ENCODE measurements at regions of chr4 and their contacts with region 1.

Region 1: GRCh38 chr4:77376788-77377460 is 219.9 kb downstream of the CCNG2 start:
- DNase-seq: no peak
- H3K4me3 ChIP-seq: no peak overlapping the region
- H3K4me3 Mint-ChIP-seq: no peak overlapping the region
- H3K27ac Mint-ChIP-seq: no peak overlapping the region
- H3K4me1 ChIP-seq: no peaks in the 10 kb centered on the region
- H3K4me1 Mint-ChIP-seq: no peaks in the 10 kb centered on the region
- H3K27me3 ChIP-seq: no peaks in the 10 kb centered on the region
- H3K27me3 Mint-ChIP-seq: peaks cover 18% of the 10 kb centered on the region
- CTCF ChIP-seq: no peak

Region 2: GRCh38 chr4:77336411-77337142 is 40.3 kb before region 1 on chr4:
- CTCF ChIA-PET with region 1: no interaction called
- POLR2A ChIA-PET with region 1: no interaction called
- intact Hi-C with region 1: no loop called
- DNase-seq: no peak
- H3K4me3 ChIP-seq: no peak overlapping the region
- H3K4me3 Mint-ChIP-seq: no peak overlapping the region
- H3K27ac Mint-ChIP-seq: no peak overlapping the region
- H3K4me1 ChIP-seq: no peaks in the 10 kb centered on the region
- H3K4me1 Mint-ChIP-seq: no peaks in the 10 kb centered on the region
- H3K27me3 ChIP-seq: no peaks in the 10 kb centered on the region
- H3K27me3 Mint-ChIP-seq: no peaks in the 10 kb centered on the region
- CTCF ChIP-seq: no peak

Region 3: DNA sequence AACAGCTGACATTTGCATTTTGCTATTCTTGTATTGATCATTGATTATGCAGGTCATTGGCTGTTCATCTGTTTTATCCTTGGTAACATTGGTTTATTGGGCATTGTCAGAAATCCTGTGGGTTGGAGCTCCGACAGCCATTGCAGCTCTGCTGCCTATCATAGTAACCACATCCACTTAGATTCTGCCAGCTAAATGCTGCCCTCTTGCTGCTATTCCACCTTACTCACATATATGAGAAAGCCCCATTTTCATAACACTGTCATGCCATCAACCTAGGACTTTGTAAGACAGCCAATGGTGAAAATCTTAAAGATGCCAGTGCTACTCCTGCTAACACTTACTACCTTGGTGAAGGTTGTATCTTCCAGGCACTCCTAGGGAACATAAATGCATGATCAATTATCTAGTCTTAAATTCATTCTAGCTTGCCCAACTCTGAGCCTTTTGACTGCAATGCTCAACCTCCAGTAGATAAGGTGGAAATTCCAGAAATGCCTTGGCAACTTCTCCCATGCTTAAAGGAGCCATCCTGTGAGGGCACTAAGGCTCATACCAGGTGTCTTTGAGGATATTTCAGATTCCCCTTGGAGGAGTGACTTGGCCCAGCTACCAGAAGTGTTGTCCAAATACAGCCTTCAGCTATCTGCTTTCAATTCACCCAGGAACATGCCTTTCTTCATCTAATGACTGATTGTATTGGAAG is 41.6 kb after region 1 on chr4:
- CTCF ChIA-PET with region 1: interaction called, 3 read pairs
- POLR2A ChIA-PET with region 1: no interaction called
- intact Hi-C with region 1: loop called (anchors 5 kb)
- DNase-seq: peak in 1 of 2 experiments; percentile 15
- H3K4me3 ChIP-seq: no peak overlapping the region
- H3K4me3 Mint-ChIP-seq: no peak overlapping the region
- H3K27ac Mint-ChIP-seq: no peak overlapping the region
- H3K4me1 ChIP-seq: no peaks in the 10 kb centered on the region
- H3K4me1 Mint-ChIP-seq: no peaks in the 10 kb centered on the region
- H3K27me3 ChIP-seq: no peaks in the 10 kb centered on the region
- H3K27me3 Mint-ChIP-seq: peaks cover 7% of the 10 kb centered on the region
- CTCF ChIP-seq: peak in 1 of 2 experiments; percentile 26

Measured in Caco-2 (cell line).